Natural killer cell (primary cell): ENCODE measurements at regions of chr1 and their contacts with region 1.

Region 1: GRCh38 chr1:153670859-153671627 is at the start of gene ILF2:
- DNase-seq: peak; percentile 93 to 98
- ATAC-seq: peak; percentile 85 to 97 (median 91)
- H3K4me3 ChIP-seq: peak within 1 kb of the TSS; percentile 88
- H3K4me3 Mint-ChIP-seq: no peak within 1 kb of the TSS
- H3K27ac ChIP-seq: peak within 1 kb of the TSS; percentile 92
- H3K27ac Mint-ChIP-seq: no peak within 1 kb of the TSS
- H3K4me1 ChIP-seq: peaks cover 20% of the 10 kb centered on the region
- H3K4me1 Mint-ChIP-seq: peaks cover 8 to 10% of the 10 kb centered on the region in 2 donors
- H3K27me3 ChIP-seq: no peaks in the 10 kb centered on the region
- H3K27me3 Mint-ChIP-seq: no peaks in the 10 kb centered on the region
- CTCF ChIP-seq: peak; percentile 23
- total RNA-seq, gene ILF2: 97.6 to 134 (median 110) TPM

Region 2: GRCh38 chr1:153375511-153375910 is 295.5 kb before region 1 on chr1 and contains the start of gene S100A12:
- intact Hi-C with region 1: no loop called
- DNase-seq: no peak
- ATAC-seq: peak in 1 of 3 donors; percentile 48
- H3K4me3 ChIP-seq: no peak within 1 kb of the TSS
- H3K4me3 Mint-ChIP-seq: no peak within 1 kb of the TSS
- H3K27ac ChIP-seq: no peak within 1 kb of the TSS
- H3K27ac Mint-ChIP-seq: no peak within 1 kb of the TSS
- H3K4me1 ChIP-seq: no peaks in the 10 kb centered on the region
- H3K4me1 Mint-ChIP-seq: no peaks in the 10 kb centered on the region
- H3K27me3 ChIP-seq: no peaks in the 10 kb centered on the region
- H3K27me3 Mint-ChIP-seq: peaks cover 7 to 19% of the 10 kb centered on the region in 2 donors
- CTCF ChIP-seq: no peak
- total RNA-seq, gene S100A12: 11.4 to 20.4 TPM in 2 of 3 donors, not detected in the other

Region 3: GRCh38 chr1:153633716-153634665 is 37.1 kb before region 1 on chr1 and contains the start of gene CHTOP:
- intact Hi-C with region 1: loop called (anchors 2 kb)
- DNase-seq: peak; percentile 98 to 99
- ATAC-seq: peak; percentile 86 to 97 (median 88)
- H3K4me3 ChIP-seq: peak within 1 kb of the TSS; percentile 72
- H3K4me3 Mint-ChIP-seq: peak within 1 kb of the TSS; percentile 99
- H3K27ac ChIP-seq: peak within 1 kb of the TSS; percentile 91
- H3K27ac Mint-ChIP-seq: peak within 1 kb of the TSS; percentile 98 to 99
- H3K4me1 ChIP-seq: peaks cover 24% of the 10 kb centered on the region
- H3K4me1 Mint-ChIP-seq: peaks cover 24 to 34% of the 10 kb centered on the region in 2 donors
- H3K27me3 ChIP-seq: no peaks in the 10 kb centered on the region
- H3K27me3 Mint-ChIP-seq: no peaks in the 10 kb centered on the region
- CTCF ChIP-seq: no peak
- total RNA-seq, gene CHTOP: 94.7 to 110 (median 106) TPM

Region 4: GRCh38 chr1:153646672-153647374 is 24.2 kb before region 1 on chr1:
- intact Hi-C with region 1: no loop called
- DNase-seq: no peak
- ATAC-seq: peak in 1 of 3 donors; percentile 38
- H3K4me3 ChIP-seq: no peak overlapping the region
- H3K4me3 Mint-ChIP-seq: peak overlapping the region; percentile 46
- H3K27ac ChIP-seq: no peak overlapping the region
- H3K27ac Mint-ChIP-seq: peak overlapping the region; percentile 82
- H3K4me1 ChIP-seq: peaks cover 15% of the 10 kb centered on the region
- H3K4me1 Mint-ChIP-seq: peaks cover 46 to 64% of the 10 kb centered on the region in 2 donors
- H3K27me3 ChIP-seq: no peaks in the 10 kb centered on the region
- H3K27me3 Mint-ChIP-seq: no peaks in the 10 kb centered on the region
- CTCF ChIP-seq: no peak

Region 5: GRCh38 chr1:153658400-153659174 is 12.5 kb before region 1 on chr1 and contains the start of gene SNAPIN:
- intact Hi-C with region 1: loop called (anchors 1 kb)
- DNase-seq: peak; percentile 86 to 91
- ATAC-seq: peak; percentile 97 to 98 (median 97)
- H3K4me3 ChIP-seq: peak within 1 kb of the TSS; percentile 73
- H3K4me3 Mint-ChIP-seq: peak within 1 kb of the TSS; percentile 92
- H3K27ac ChIP-seq: peak within 1 kb of the TSS; percentile 76
- H3K27ac Mint-ChIP-seq: peak within 1 kb of the TSS; percentile 79 to 93
- H3K4me1 ChIP-seq: peaks cover 18% of the 10 kb centered on the region
- H3K4me1 Mint-ChIP-seq: peaks cover 7 to 13% of the 10 kb centered on the region in 2 donors
- H3K27me3 ChIP-seq: no peaks in the 10 kb centered on the region
- H3K27me3 Mint-ChIP-seq: no peaks in the 10 kb centered on the region
- CTCF ChIP-seq: no peak
- total RNA-seq, gene SNAPIN: 21.0 to 25.5 (median 23.5) TPM